MCF 10A (cell line): ENCODE measurements at regions of chr14 and their contacts with region 1.

Region 1: DNA sequence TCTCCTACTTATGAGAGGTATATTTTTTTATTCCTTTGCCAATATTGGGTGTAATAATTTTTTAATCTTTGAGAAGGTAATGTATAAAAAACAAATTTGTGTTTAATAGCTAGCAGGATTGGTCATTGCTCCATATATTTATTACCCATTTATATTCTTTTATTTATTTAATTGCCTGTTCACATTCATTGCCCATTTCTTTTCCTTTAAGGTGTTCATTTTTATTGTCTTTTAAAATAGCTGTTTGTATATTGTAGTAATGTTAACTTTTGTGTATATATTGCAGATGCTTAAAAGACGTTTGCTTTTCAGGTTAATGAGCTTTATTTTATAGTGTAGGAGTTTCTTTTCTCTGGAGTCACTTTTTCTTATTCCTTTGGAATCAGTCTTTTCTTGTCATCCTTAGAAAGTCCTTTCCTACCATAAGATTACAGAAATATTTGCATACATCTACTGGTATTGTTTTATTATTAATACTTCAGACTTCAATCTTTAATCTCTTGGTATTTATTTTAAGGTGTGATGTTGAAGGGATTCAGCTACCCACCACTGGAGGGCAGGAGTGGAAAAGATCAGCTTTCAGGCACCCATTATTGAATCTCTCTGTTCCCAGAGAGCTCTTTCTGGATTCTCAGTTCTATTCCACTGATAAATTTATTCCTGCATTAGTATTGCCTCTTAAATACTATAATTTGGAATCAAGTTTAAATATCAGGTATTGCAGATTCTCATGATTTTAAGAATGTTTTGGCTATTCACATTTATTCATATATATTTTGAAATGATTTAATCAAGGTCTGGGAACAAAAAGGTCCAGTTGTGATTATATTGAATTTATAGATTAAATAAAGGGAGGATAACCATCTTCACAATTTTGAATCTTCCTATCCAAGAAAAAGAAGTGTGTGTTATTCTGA is 17.3 kb downstream of the PPM1A start:
- DNase-seq: peak; percentile 53
- H3K4me3 Mint-ChIP-seq: no peak overlapping the region
- H3K27ac Mint-ChIP-seq: no peak overlapping the region
- H3K4me1 Mint-ChIP-seq: peaks cover 6% of the 10 kb centered on the region
- H3K27me3 Mint-ChIP-seq: no peaks in the 10 kb centered on the region
- CTCF ChIP-seq: peak; percentile 35

Region 2: DNA sequence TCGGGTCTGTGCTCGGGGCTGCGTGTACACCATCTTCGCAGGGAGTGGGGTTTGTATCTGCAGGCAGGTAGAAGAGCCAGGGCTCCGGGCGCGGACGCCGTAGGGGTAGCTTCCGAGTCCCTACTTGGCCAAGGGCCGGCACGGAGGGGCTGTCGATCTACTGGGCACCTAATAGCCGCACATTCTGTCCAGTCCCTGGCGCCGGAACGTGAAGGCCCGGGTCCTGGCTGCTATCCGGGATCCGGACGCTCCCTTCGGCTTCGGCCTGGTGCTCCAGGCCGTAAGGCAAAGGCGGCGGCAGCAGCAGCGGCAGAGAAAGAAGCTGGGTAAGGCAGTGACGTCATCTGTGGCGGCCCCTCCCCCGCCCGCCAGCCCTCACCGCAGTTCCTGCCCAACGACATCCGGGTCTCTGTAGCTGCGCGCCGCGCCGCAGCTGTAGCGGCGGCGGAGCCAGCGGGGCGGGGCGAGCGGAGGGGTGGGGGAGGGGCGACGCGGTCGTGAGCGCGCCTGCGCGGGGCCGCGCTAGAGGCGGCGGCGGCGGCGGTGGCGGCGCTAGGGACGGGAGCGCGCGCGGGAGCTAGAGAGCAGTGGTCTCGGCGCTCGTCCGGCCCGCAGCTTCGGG is 17.5 kb before region 1 on chr14 and contains the start of gene PPM1A:
- CTCF ChIA-PET with region 1: interaction called, 3 read pairs
- POLR2A ChIA-PET with region 1: interaction called, 19 read pairs
- intact Hi-C with region 1: no loop called
- DNase-seq: peak; percentile 89
- H3K4me3 Mint-ChIP-seq: peak within 1 kb of the TSS; percentile 98
- H3K27ac Mint-ChIP-seq: peak within 1 kb of the TSS; percentile 99
- H3K4me1 Mint-ChIP-seq: peaks cover 25% of the 10 kb centered on the region
- H3K27me3 Mint-ChIP-seq: no peaks in the 10 kb centered on the region
- CTCF ChIP-seq: no peak
- total RNA-seq, gene PPM1A: 47.2 and 50.4 TPM in 2 replicates

Region 3: GRCh38 chr14:60339571-60339970 is 73.3 kb after region 1 on chr14:
- CTCF ChIA-PET with region 1: no interaction called
- POLR2A ChIA-PET with region 1: no interaction called
- intact Hi-C with region 1: no loop called
- DNase-seq: no peak
- H3K4me3 Mint-ChIP-seq: no peak overlapping the region
- H3K27ac Mint-ChIP-seq: no peak overlapping the region
- H3K4me1 Mint-ChIP-seq: no peaks in the 10 kb centered on the region
- H3K27me3 Mint-ChIP-seq: peaks cover 27% of the 10 kb centered on the region
- CTCF ChIP-seq: no peak

Region 4: GRCh38 chr14:60495946-60496345 is 229.7 kb after region 1 on chr14:
- CTCF ChIA-PET with region 1: no interaction called
- POLR2A ChIA-PET with region 1: no interaction called
- intact Hi-C with region 1: no loop called
- DNase-seq: peak; percentile 79
- H3K4me3 Mint-ChIP-seq: no peak overlapping the region
- H3K27ac Mint-ChIP-seq: no peak overlapping the region
- H3K4me1 Mint-ChIP-seq: no peaks in the 10 kb centered on the region
- H3K27me3 Mint-ChIP-seq: peaks cover 52% of the 10 kb centered on the region
- CTCF ChIP-seq: no peak